ENCODE measurements at regions of chr6 and their contacts with region 1.

Region 1: GRCh38 chr6:126033696-126034095 is 47.4 kb downstream of the TRMT11 start:
- DNase-seq: peak; percentile 87
- H3K4me3 ChIP-seq: no peak overlapping the region
- H3K27me3 ChIP-seq: no peaks in the 10 kb centered on the region
- CTCF ChIP-seq: peak; percentile 74

Region 2: GRCh38 chr6:126176282-126176681 is 142.6 kb after region 1 on chr6:
- CTCF ChIA-PET with region 1: interaction called, 11 read pairs
- POLR2A ChIA-PET with region 1: no interaction called
- DNase-seq: no peak
- H3K4me3 ChIP-seq: no peak overlapping the region
- H3K27me3 ChIP-seq: peaks cover 1% of the 10 kb centered on the region; the same call in 1 of the 2 replicates
- CTCF ChIP-seq: no peak

Measured in BJ (cell line).